CD4-positive, alpha-beta T cell (primary cell): ENCODE measurements at regions of chr13 and their contacts with region 1.

Region 1: GRCh38 chr13:48975856-48976575 is at the start of gene FNDC3A:
- DNase-seq: peak; percentile 74 to 94 (median 82)
- ATAC-seq: peak; percentile 68
- H3K4me3 ChIP-seq: peak within 1 kb of the TSS; percentile 80
- H3K4me3 Mint-ChIP-seq: peak within 1 kb of the TSS; percentile 99
- H3K27ac ChIP-seq: peak within 1 kb of the TSS; percentile 95 to 97
- H3K27ac Mint-ChIP-seq: peak within 1 kb of the TSS; percentile 98
- H3K4me1 ChIP-seq: peaks cover 9% of the 10 kb centered on the region
- H3K4me1 Mint-ChIP-seq: peaks cover 54% of the 10 kb centered on the region
- H3K27me3 ChIP-seq: no peaks in the 10 kb centered on the region
- H3K27me3 Mint-ChIP-seq: no peaks in the 10 kb centered on the region
- CTCF ChIP-seq: no peak
- total RNA-seq, gene FNDC3A: 27.7 to 28.6 TPM

Region 2: GRCh38 chr13:48094781-48095502 is 881.1 kb before region 1 on chr13 and contains the start of gene MED4:
- CTCF ChIA-PET with region 1: no interaction called
- POLR2A ChIA-PET with region 1: interaction called, 3 read pairs
- intact Hi-C with region 1: loop called in 1 of 2 experiments (anchors 10 kb)
- DNase-seq: peak; percentile 95 to 99 (median 97)
- ATAC-seq: peak; percentile 98
- H3K4me3 ChIP-seq: peak within 1 kb of the TSS; percentile 85
- H3K4me3 Mint-ChIP-seq: peak within 1 kb of the TSS; percentile 100
- H3K27ac ChIP-seq: peak within 1 kb of the TSS; percentile 84 to 89
- H3K27ac Mint-ChIP-seq: peak within 1 kb of the TSS; percentile 95
- H3K4me1 ChIP-seq: peaks cover 23% of the 10 kb centered on the region
- H3K4me1 Mint-ChIP-seq: peaks cover 53% of the 10 kb centered on the region
- H3K27me3 ChIP-seq: no peaks in the 10 kb centered on the region
- H3K27me3 Mint-ChIP-seq: no peaks in the 10 kb centered on the region
- CTCF ChIP-seq: peak; percentile 99
- total RNA-seq, gene MED4: 48.9 to 56.1 TPM

Region 3: DNA sequence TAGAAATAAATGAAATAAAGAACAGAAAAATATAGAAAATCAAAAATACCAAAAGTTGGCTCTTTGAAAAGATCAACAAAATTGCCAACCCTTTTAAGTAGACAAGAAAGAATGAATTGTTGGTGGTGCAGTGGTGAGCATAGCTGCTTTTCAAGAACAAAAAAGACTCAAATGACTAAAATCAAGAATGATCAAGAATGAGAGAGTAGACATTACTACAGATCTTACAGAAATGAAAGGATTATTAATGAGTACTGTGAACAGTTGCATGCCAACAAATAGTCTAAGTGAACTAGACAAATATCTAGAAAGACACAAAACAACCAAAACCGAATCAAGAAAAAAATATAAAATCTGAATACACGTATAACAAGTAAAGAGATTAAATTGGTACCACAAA is 53.6 kb after region 1 on chr13:
- CTCF ChIA-PET with region 1: no interaction called
- POLR2A ChIA-PET with region 1: no interaction called
- intact Hi-C with region 1: no loop called
- DNase-seq: no peak
- ATAC-seq: no peak
- H3K4me3 ChIP-seq: no peak overlapping the region
- H3K4me3 Mint-ChIP-seq: no peak overlapping the region
- H3K27ac ChIP-seq: no peak overlapping the region
- H3K27ac Mint-ChIP-seq: no peak overlapping the region
- H3K4me1 ChIP-seq: no peaks in the 10 kb centered on the region
- H3K4me1 Mint-ChIP-seq: no peaks in the 10 kb centered on the region
- H3K27me3 ChIP-seq: no peaks in the 10 kb centered on the region
- H3K27me3 Mint-ChIP-seq: no peaks in the 10 kb centered on the region
- CTCF ChIP-seq: no peak

Region 4: DNA sequence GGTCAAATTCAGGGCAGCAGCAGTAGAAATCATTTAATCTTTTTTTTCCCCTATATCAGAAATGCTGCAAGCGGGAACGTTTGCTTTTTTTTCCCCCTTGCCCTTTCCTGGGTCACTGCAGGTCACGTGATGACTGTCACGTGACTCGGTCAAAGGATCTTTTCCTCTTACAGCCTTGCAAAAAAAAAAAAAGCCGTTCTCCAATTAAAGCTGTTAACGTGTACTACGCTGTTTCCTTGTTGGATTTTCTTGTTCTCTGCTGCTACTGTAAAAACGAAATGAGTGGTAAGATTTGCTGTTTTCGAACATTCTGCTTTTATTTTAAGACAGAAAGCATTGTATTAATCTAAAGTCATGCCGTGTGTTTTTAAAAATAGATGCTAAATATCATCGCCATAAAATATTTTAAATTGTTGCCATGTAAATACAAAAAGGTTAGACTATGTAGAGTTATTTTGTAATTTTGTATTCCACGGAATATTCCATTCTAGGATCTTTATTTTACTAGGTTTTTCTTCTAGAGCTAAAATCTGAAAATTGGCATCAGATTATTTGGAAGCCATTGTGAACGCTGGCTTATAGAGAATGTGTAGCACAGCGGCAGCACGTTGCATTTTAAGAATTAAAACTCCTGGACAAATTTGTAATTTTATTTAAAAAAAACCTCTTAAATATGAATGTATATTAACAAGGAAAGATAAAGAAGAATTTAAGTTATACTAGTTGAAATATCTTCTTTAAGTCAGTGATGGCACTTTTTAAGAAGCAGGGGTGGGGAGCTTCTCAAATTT is 134.3 kb after region 1 on chr13:
- CTCF ChIA-PET with region 1: no interaction called
- POLR2A ChIA-PET with region 1: interaction called, 30 read pairs
- intact Hi-C with region 1: loop called (anchors 2 to 5 kb)
- DNase-seq: peak; percentile 33 to 92 (median 62)
- ATAC-seq: peak; percentile 80
- H3K4me3 ChIP-seq: peak overlapping the region; percentile 67
- H3K4me3 Mint-ChIP-seq: peak overlapping the region; percentile 91
- H3K27ac ChIP-seq: no peak overlapping the region
- H3K27ac Mint-ChIP-seq: peak overlapping the region; percentile 85
- H3K4me1 ChIP-seq: peaks cover 5% of the 10 kb centered on the region
- H3K4me1 Mint-ChIP-seq: peaks cover 40% of the 10 kb centered on the region
- H3K27me3 ChIP-seq: no peaks in the 10 kb centered on the region
- H3K27me3 Mint-ChIP-seq: no peaks in the 10 kb centered on the region
- CTCF ChIP-seq: no peak

Region 5: DNA sequence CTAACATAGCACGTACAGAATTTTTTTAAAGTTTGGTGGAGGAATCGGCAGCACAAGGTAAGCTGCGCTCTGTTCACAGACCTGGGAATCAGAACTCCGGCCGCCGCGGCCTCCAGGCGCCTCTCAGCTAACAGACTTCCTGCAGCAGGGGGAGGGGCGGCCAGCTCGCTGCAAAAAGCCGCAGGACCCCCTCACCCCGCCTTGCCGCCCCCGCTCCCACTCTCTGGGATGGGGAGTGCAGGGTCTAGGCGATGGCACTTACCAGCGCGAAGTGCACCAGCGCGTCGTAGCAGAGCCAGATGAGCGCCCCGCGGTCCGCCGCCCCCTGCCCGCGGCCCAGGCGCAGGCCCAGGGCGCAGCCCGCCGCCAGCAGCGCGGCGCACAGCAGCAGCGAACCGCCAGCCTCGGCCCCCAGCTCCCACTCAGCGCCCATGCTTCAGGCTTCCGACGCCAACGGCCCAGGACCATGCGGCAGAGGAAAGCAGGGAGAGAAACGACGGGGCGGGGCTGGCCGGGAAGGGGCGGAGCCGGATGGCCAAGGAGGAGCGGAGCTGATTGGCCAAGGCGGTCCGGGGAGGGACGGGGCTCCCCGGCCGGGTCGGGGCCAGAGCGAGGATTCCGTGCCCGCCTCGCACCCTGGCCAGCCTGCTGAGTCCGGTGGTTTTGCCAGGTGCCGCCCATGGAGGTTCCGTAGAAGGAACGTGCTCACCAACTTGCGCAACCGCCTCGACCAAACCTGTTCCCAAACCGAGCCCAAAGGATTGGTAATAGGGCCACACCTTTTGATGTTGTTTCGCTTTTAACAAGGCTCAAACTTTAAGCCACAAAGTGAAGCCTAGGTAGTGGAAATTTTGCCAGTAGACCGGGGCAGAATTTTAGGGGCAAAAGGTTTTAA is 715.2 kb after region 1 on chr13 and contains the start of gene EBPL:
- CTCF ChIA-PET with region 1: no interaction called
- POLR2A ChIA-PET with region 1: no interaction called
- intact Hi-C with region 1: loop called in 1 of 2 experiments (anchors 10 kb)
- DNase-seq: peak; percentile 66 to 95 (median 84)
- ATAC-seq: peak; percentile 95
- H3K4me3 ChIP-seq: peak within 1 kb of the TSS; percentile 93
- H3K4me3 Mint-ChIP-seq: peak within 1 kb of the TSS; percentile 92
- H3K27ac ChIP-seq: peak within 1 kb of the TSS; percentile 49 to 52
- H3K27ac Mint-ChIP-seq: peak within 1 kb of the TSS; percentile 71
- H3K4me1 ChIP-seq: peaks cover 19% of the 10 kb centered on the region
- H3K4me1 Mint-ChIP-seq: peaks cover 52% of the 10 kb centered on the region
- H3K27me3 ChIP-seq: no peaks in the 10 kb centered on the region
- H3K27me3 Mint-ChIP-seq: no peaks in the 10 kb centered on the region
- CTCF ChIP-seq: no peak
- total RNA-seq, gene EBPL: 22.3 to 23.2 TPM